Mucosa of descending colon (tissue), 3 donors: ENCODE measurements at regions of chr15 and their contacts with region 1.

Region 1: GRCh38 chr15:63288778-63289378 is 11.5 kb downstream of the APH1B start:
- DNase-seq: peak in 1 of 3 donors; percentile 39
- ATAC-seq: peak; percentile 69
- H3K4me3 ChIP-seq: no peak overlapping the region
- H3K4me1 ChIP-seq: no peaks in the 10 kb centered on the region
- CTCF ChIP-seq: no peak

Region 2: DNA sequence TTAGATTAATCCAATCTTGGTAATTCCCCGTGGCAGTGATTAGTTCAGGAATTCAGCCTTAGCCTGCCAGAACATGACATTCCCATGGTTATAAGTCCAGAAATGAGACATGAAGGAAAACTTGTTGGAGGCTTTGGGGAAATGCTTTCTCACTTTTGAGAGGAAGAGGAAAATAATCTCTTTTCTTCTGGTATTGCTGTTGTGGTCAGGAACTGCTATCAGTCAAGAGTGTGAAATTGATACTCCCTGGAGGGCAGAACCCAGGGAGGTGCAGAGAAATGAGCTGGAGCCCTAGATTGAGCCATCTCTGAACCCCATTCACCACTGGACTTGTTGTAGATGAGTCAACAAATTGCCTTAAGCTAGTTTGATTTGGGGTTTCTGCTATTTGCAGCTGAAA is 50.1 kb before region 1 on chr15:
- intact Hi-C with region 1: no loop called
- DNase-seq: no peak
- ATAC-seq: no peak
- H3K4me3 ChIP-seq: no peak overlapping the region
- H3K4me1 ChIP-seq: peaks cover 10% of the 10 kb centered on the region
- CTCF ChIP-seq: no peak

Region 3: GRCh38 chr15:63402498-63403253 is 113.8 kb after region 1 on chr15:
- intact Hi-C with region 1: loop called in 1 of 2 experiments (anchors 5 kb)
- DNase-seq: peak in 1 of 3 donors; percentile 34
- ATAC-seq: peak; percentile 69
- H3K4me3 ChIP-seq: no peak overlapping the region
- H3K4me1 ChIP-seq: peaks cover 1% of the 10 kb centered on the region
- CTCF ChIP-seq: peak; percentile 31

Region 4: GRCh38 chr15:64373360-64373759 is 1084.5 kb after region 1 on chr15:
- intact Hi-C with region 1: no loop called
- DNase-seq: no peak
- ATAC-seq: no peak
- H3K4me3 ChIP-seq: no peak overlapping the region
- H3K4me1 ChIP-seq: no peaks in the 10 kb centered on the region
- CTCF ChIP-seq: no peak